HepG2 (cell line): ENCODE measurements at regions of chr17 and their contacts with region 1.

Region 1: DNA sequence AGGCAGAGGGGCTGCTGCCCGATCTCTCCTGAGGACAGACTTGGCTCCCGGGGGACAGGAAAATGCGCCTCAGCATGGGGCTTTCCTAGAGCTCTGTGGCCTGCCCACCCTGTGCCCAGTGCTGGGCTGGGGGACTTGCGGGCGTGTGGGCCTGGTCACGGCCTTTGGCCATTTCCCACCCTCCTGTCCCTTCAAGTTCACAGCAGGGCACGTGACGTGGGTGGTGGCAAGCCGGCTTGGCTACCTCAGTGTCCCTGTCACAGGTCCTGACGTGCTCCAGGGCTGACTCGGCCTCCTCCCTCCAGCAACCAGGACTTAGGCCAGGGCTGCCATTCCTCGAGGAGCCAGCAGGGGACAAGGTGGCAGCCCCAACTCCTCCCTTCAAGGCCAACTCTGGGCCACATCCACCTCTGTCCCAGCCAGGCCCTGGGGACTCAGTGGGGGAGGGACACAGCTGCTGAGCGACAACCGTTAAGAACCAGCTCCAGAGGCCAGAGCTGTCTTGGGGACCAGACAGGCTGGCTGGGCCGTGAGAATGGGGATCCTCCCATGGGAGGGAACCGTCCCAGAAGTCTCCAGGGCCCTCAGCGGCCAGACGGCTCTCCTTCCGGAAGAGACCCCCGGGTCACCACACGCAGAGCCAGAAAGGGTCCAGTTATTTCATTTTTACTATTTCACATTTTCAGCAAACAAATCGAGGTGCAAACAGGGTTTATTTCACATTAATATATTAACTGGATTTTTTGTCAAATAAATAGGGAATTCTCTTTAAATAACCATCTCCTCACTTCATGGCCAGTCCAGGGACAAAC is 1.1 kb upstream of the UNC13D start:
- DNase-seq: peak; percentile 86
- ATAC-seq: peak; percentile 65
- H3K4me3 ChIP-seq: peak overlapping the region; percentile 66 to 84 (median 66)
- H3K27ac ChIP-seq: peak overlapping the region; percentile 79
- H3K4me1 ChIP-seq: peaks cover 70% of the 10 kb centered on the region
- H3K27me3 ChIP-seq: no peaks in the 10 kb centered on the region
- CTCF ChIP-seq: peak; percentile 90
- EP300 ChIP-seq: peak in 1 of 2 experiments; percentile 31; a peak in 1 of 4 replicates
- POLR2A ChIP-seq: peak in 1 of 2 experiments; percentile 67; a peak in 2 of 4 replicates
- RAD21 ChIP-seq: peak; percentile 82

Region 2: DNA sequence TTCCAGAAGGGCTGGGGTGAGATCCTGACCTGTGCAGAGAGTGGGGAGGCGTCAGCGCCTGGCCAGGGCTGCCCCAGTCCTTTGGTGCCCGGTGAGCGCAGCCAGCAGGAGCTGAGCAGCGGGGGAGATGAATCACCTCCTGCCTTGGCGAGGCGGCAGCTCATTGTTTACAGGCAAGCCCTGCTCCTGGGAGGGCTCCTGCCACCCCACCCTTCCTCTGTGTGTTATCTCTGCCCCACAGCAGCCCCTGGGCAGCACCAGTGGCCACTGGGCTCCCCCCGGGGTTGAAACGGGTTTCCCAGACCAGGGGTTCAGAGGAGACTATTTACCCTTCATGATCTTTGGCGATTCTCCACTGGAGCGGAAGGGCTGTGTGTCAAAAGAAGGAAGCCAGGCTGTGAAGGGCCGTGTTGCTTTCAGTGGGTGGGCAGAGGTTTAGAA is 138.1 kb before region 1 on chr17:
- CTCF ChIA-PET with region 1: no interaction called
- POLR2A ChIA-PET with region 1: no interaction called
- in situ Hi-C with region 1: no loop called
- intact Hi-C with region 1: no loop called
- DNase-seq: no peak
- ATAC-seq: no peak
- H3K4me3 ChIP-seq: no peak overlapping the region
- H3K27ac ChIP-seq: no peak overlapping the region
- H3K4me1 ChIP-seq: no peaks in the 10 kb centered on the region
- H3K27me3 ChIP-seq: no peaks in the 10 kb centered on the region
- CTCF ChIP-seq: no peak
- EP300 ChIP-seq: no peak
- POLR2A ChIP-seq: no peak
- RAD21 ChIP-seq: no peak

Region 3: DNA sequence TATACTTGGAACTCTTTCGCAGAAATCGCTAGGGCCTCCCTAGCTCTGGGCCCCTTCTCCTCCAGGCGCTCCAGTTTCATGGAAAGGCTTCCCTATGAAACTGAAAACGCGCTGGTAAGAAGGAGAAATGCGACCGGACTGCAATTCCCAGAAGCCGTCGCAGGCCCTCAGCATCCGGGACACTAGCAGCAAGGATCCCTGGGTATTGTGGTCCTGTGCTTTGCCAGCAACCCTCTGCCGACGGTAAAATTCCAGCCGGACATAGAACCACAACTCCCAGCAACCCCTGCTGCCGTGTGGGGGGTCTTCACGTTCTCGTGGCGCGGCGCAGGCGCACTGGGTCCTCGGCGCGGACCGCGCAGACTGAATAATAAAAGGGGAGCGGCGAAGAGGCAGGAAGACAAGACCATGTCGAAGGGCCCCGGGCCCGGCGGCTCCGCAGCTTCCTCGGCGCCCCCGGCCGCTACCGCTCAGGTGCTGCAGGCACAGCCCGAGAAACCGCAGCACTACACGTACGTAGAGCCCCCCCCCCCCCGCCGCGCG is 60.7 kb before region 1 on chr17 and contains the start of gene UNK:
- CTCF ChIA-PET with region 1: no interaction called
- POLR2A ChIA-PET with region 1: interaction called, 132 read pairs
- in situ Hi-C with region 1: no loop called
- intact Hi-C with region 1: loop called (anchors 2 kb)
- DNase-seq: peak; percentile 99
- ATAC-seq: peak; percentile 80
- H3K4me3 ChIP-seq: peak within 1 kb of the TSS; percentile 57 to 82 (median 81)
- H3K27ac ChIP-seq: peak within 1 kb of the TSS; percentile 93
- H3K4me1 ChIP-seq: peaks cover 64% of the 10 kb centered on the region
- H3K27me3 ChIP-seq: no peaks in the 10 kb centered on the region; a peak in 1 of 5 replicates
- CTCF ChIP-seq: 0 out of 2 replicates have a peak, but pooled peaks have one; percentile 11
- EP300 ChIP-seq: peak; percentile 62 to 68; a peak in 3 of 4 replicates
- POLR2A ChIP-seq: peak; percentile 63 to 82
- RAD21 ChIP-seq: peak; percentile 61
- total RNA-seq, gene UNK: 28.6 and 33.0 TPM in 2 replicates

Region 4: DNA sequence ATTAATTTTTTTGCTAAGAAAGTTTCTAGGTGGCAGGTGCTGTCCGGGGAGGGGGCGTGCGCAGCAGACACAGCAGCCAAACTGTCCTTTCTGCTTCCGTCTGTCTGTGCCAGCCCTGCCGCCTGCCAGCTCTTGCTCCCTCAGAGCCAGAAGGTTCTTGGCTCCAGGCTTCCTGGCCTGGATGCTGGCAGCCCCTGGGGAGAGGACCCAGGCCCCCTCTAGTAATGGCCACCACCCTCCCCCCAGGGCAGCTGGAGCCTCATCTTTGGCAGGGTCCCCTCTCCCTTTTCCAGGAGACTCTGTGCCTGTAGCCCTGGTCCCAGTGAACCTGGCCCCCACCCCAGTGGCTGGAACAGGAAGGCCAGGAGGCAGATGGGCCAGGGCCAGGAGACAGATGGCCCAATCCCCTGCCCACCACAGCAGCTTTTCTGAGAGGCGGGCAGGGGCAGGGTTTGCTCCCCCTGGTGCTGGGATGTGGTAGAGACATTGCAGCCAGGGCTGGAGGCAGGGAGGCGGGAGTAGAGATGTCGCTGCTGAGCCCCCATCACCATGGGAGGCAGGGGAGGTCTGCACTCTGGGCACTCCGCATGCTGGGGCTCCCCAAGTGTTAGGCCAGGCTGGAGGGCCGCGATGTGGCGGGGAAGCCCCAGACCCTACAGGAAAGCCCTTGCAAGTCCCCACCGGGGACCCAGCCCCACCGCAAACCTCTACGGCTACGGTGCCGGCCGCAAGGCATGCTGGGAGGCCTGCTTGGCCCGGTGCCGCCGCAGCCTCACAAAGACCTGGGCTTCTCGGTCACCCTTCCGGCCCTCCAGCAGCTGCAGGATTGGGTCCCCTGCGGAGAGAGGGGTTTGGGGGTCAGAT is 17.8 kb before region 1 on chr17:
- CTCF ChIA-PET with region 1: interaction called, 6 read pairs
- POLR2A ChIA-PET with region 1: interaction called, 88 read pairs
- in situ Hi-C with region 1: no loop called
- intact Hi-C with region 1: no loop called
- DNase-seq: peak; percentile 50
- ATAC-seq: peak; percentile 73
- H3K4me3 ChIP-seq: no peak overlapping the region
- H3K27ac ChIP-seq: peak overlapping the region; percentile 61
- H3K4me1 ChIP-seq: peaks cover 22% of the 10 kb centered on the region
- H3K27me3 ChIP-seq: no peaks in the 10 kb centered on the region
- CTCF ChIP-seq: peak; percentile 87
- EP300 ChIP-seq: no peak
- POLR2A ChIP-seq: no peak
- RAD21 ChIP-seq: peak; percentile 74

Region 5: GRCh38 chr17:75872434-75873351 is 27.4 kb after region 1 on chr17:
- CTCF ChIA-PET with region 1: interaction called, 4 read pairs
- POLR2A ChIA-PET with region 1: interaction called, 229 read pairs
- in situ Hi-C with region 1: no loop called
- intact Hi-C with region 1: no loop called
- DNase-seq: peak; percentile 99
- ATAC-seq: peak; percentile 64
- H3K4me3 ChIP-seq: peak overlapping the region; percentile 13 to 62 (median 36); a peak in 5 of 6 replicates
- H3K27ac ChIP-seq: peak overlapping the region; percentile 97
- H3K4me1 ChIP-seq: peaks cover 88% of the 10 kb centered on the region
- H3K27me3 ChIP-seq: no peaks in the 10 kb centered on the region
- CTCF ChIP-seq: peak; percentile 43
- EP300 ChIP-seq: peak; percentile 81 to 87; a peak in 3 of 4 replicates
- POLR2A ChIP-seq: peak in 1 of 2 experiments; percentile 84; a peak in 2 of 4 replicates
- RAD21 ChIP-seq: peak; percentile 68

Region 6: DNA sequence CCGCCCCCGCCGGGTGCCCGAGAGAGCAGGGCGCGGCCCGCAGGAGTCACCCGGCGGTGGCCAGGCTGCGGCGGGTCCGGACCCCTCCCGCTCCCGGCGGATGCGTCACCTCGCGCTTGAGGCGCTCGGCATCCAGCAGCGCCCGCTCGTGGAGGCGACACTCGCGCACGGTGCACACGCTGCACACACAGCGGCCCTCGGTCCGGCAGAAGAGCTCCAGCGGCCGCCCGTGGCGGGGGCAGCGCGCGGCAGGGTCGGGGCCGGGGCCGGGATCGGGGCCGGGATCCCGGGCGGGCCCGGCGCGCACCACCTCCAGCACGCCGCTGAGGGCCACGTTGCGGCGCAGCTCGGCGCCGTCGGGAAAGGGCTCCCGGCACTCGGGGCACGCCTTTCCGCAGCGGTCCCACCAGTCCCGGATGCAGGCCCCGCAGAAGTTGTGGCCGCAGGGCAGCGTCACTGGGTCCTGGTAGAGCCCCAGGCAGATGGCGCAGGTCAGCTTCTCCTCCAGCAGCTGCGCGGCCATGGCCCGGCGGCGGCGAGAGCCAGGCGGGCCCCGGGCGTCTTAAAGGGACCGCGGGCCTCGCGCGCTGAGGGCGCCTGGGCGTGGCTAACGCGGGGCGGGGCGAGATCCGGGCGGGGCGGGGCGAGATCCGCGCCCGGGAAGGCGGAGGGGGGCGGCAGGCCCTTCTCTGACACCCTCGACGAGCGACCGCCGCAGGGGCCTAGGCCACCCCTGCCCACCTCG is 51.3 kb after region 1 on chr17 and contains the start of gene TRIM65:
- CTCF ChIA-PET with region 1: no interaction called
- POLR2A ChIA-PET with region 1: interaction called, 16 read pairs
- in situ Hi-C with region 1: no loop called
- intact Hi-C with region 1: no loop called
- DNase-seq: peak; percentile 56
- ATAC-seq: peak; percentile 18
- H3K4me3 ChIP-seq: peak within 1 kb of the TSS; percentile 68 to 83 (median 75)
- H3K27ac ChIP-seq: peak within 1 kb of the TSS; percentile 79
- H3K4me1 ChIP-seq: peaks cover 46% of the 10 kb centered on the region
- H3K27me3 ChIP-seq: no peaks in the 10 kb centered on the region
- CTCF ChIP-seq: peak; percentile 64
- EP300 ChIP-seq: no peak
- POLR2A ChIP-seq: peak in 1 of 2 experiments; percentile 92; a peak in 2 of 4 replicates
- RAD21 ChIP-seq: peak; percentile 84
- total RNA-seq, gene TRIM65: 22.4 and 24.6 TPM in 2 replicates

Region 7: DNA sequence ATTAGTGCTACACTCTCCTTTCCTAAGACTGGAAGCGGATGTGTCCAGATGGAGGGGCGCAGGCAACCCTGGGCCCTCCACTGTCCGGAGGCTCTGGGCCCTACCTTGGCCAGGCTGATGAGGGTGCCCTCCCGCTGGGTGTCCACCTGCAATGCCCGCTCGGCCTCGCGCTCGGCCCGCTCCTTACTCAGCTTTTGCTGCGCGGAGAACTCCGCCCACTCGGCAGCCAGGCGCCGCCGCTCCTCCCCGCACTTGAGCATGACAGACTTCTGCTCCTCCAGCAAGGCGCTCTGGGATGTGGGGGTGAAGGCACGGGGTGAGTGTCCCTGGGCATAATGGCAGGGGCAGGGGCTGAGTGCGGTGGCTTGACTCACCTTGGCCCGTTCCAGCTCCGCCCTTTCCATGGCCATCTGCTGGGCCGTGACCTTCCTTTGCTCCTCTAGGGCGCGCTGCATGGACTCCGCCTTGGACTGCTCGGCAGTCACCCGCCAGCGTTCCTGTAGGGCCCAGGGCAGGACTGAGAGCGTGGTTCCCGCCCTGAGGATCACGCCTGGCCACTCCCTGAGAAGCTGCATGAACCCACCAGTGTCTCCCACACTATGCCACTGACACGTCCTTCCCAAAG is 69.5 kb after region 1 on chr17:
- CTCF ChIA-PET with region 1: no interaction called
- POLR2A ChIA-PET with region 1: no interaction called
- in situ Hi-C with region 1: no loop called
- intact Hi-C with region 1: no loop called
- DNase-seq: peak; percentile 50
- ATAC-seq: peak; percentile 86
- H3K4me3 ChIP-seq: no peak overlapping the region; a peak in 1 of 6 replicates
- H3K27ac ChIP-seq: no peak overlapping the region
- H3K4me1 ChIP-seq: peaks cover 28% of the 10 kb centered on the region
- H3K27me3 ChIP-seq: no peaks in the 10 kb centered on the region
- CTCF ChIP-seq: peak; percentile 60
- EP300 ChIP-seq: no peak
- POLR2A ChIP-seq: no peak
- RAD21 ChIP-seq: no peak